Right cardiac atrium (tissue), 5 donors: ENCODE measurements at regions of chr5 and their contacts with region 1.

Region 1: DNA sequence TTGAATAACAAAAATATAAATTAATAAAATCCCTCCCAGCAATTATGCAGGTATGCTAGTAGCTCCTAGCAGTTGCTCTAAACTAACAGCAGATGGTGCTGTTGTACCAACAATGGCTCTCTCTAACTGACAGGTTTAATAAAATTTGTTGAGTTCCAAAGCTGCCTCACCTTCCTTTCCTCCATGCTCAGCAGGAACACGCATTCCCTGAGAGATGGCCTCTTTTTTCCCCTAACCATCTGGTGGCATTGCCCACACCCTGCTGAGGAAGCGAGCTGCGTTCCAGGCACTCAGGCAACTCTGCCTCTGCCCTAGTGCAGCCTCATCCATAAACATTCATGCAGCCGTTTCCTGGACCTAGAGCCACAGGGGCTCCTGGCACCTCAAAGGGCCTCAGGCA is 106.2 kb downstream of the KLHL3 start:
- DNase-seq: no peak
- ATAC-seq: peak; percentile 68 to 80
- H3K4me3 ChIP-seq: no peak overlapping the region
- H3K27ac ChIP-seq: peak overlapping the region; percentile 94
- H3K4me1 ChIP-seq: peaks cover 8% of the 10 kb centered on the region
- H3K27me3 ChIP-seq: no peaks in the 10 kb centered on the region

Region 2: GRCh38 chr5:137735555-137736284 is 106.1 kb after region 1 on chr5 and contains the start of gene KLHL3:
- intact Hi-C with region 1: loop called (anchors 2 to 10 kb)
- DNase-seq: peak; percentile 27 to 73 (median 63)
- ATAC-seq: peak; percentile 68 to 72
- H3K4me3 ChIP-seq: peak within 1 kb of the TSS; percentile 45
- H3K27ac ChIP-seq: peak within 1 kb of the TSS; percentile 47
- H3K4me1 ChIP-seq: peaks cover 13% of the 10 kb centered on the region
- H3K27me3 ChIP-seq: no peaks in the 10 kb centered on the region
- total RNA-seq, gene KLHL3: 39.6 to 57.7 (median 41.0) TPM